Thyroid gland (tissue), 4 donors: ENCODE measurements at regions of chr20 and their contacts with region 1.

Region 1: GRCh38 chr20:645318-646106 is 7.5 kb downstream of the SRXN1 start:
- DNase-seq: peak; percentile 57 to 61
- H3K4me3 ChIP-seq: no peak overlapping the region
- H3K27ac ChIP-seq: no peak overlapping the region
- H3K4me1 ChIP-seq: peaks cover 11 to 12% of the 10 kb centered on the region in 2 donors
- H3K27me3 ChIP-seq: no peaks in the 10 kb centered on the region
- CTCF ChIP-seq: peak; percentile 69 to 95 (median 84)
- POLR2A ChIP-seq: no peak

Region 2: DNA sequence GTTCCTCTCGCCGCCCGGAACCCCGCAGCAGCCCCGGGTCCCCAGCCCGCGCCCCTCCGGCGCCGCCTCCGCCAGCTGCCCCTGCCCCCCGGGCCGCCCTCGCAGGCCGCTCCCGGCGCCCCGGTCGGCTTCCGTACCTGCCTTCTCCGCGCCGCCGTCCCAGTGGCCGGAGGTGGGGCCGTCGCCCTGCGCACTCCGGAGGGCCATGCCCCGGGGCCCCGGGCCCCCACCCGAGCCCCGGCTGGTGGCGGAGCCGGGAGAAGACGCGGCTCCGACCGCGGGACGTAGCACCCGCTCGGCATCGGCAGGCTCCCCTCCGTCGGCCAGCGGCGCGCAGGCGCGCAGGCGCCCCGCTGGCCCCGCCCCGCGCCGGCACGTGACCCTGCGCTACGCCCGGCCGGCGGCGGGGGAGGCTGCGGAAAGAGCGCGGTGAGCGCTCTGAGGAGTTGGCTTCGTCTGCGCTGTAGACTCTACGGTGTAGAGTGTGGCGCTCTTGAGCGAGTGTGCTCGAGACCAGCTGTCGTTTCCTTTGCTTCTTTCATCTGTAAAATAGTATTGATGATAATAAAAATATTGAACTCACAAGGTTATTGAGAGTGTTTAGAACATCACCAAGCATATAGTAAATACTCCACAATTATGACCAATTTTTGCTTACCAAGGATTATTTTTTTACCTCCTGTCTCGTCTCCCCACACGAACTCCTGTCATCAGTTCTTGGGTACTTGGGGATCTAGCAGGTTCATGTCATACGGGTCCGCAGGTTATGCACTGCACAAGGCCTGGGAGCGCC is 183.1 kb before region 1 on chr20 and contains the start of gene TBC1D20:
- intact Hi-C with region 1: loop called (anchors 10 kb)
- DNase-seq: peak; percentile 85
- H3K4me3 ChIP-seq: peak within 1 kb of the TSS; percentile 25 to 89 (median 87)
- H3K27ac ChIP-seq: peak within 1 kb of the TSS; percentile 85 to 93 (median 89)
- H3K4me1 ChIP-seq: peaks cover 20 to 23% of the 10 kb centered on the region in 2 donors
- H3K27me3 ChIP-seq: no peaks in the 10 kb centered on the region
- CTCF ChIP-seq: peak in 2 of 6 experiments; percentile 14
- POLR2A ChIP-seq: peak in 1 of 2 donors; percentile 94
- total RNA-seq, gene TBC1D20: 34.1 to 40.5 (median 35.6) TPM

Region 3: DNA sequence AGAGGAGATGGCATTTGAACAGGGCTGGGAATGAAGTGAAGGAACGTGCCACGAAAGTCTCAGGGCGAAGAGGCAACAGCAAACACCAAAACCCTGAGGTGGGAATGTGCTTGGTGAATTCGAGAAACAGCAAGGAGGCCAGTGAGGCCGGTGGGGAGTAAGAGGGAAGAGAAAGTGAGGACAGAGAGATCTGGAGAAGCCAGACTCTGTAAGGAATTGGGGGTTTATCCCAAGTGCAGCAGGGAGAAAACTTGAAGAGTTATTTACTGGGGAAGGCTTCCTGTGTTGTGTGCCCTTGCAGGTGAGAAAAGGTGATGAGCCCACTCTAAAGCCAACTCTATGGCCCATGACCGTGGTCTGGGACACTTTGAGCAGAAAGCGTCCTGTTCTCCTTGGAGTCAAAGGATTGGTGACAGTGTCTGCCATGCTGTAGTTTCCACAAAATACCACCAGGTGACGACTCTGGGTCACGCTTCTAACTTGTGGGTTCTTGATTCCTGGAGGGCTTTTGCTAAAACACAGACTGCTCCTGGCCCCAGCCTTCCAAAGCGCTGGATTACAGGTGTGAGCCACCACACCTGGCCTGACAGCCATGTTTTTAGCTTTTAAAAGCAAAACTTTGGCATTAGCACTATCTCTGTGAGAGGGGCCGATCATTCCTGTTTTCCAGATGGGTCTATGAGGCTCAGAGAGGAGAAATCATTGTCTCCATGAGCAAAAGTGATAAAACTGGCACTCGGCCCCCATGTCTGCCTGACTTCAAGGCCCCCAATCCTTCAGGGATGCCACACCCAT is 83.9 kb before region 1 on chr20:
- intact Hi-C with region 1: loop called (anchors 5 kb)
- DNase-seq: peak; percentile 44 to 51
- H3K4me3 ChIP-seq: no peak overlapping the region
- H3K27ac ChIP-seq: no peak overlapping the region
- H3K4me1 ChIP-seq: no peaks in the 10 kb centered on the region
- H3K27me3 ChIP-seq: no peaks in the 10 kb centered on the region
- CTCF ChIP-seq: peak; percentile 70 to 89 (median 76)
- POLR2A ChIP-seq: no peak

Region 4: DNA sequence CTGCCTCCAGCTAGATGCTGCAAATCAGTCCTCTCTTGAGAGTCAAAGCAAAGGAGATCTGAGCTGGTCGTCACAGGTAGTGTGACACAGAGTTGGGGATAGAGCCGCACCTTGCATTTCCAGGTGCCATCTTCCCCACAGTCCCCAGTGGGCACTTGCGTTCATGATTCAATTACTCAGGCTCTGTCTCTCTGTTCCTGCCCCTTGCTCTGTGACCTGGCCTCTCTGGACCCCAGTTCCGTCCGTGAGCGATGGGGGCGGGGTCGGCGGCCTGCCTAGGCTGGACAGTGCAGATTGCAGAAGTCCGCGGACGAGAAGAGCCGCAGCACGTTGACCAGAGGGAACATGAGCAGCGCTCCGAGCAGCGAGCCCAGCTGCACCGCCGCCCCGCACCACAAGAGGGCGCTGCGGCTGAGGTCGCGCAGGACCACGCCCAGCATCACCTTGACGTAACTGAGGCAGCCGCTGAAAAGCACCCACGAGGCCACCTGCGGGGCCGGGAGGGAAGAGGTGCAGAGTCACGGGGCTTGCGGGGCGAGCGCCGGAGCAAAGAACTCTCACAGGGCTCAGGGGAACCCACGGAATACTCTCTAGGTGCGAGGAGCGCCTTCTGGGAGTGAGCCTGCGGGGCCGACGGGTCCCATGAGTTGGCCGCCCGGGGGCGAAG is 115.4 kb after region 1 on chr20:
- intact Hi-C with region 1: no loop called
- DNase-seq: peak; percentile 16 to 28
- H3K4me3 ChIP-seq: no peak overlapping the region
- H3K27ac ChIP-seq: no peak overlapping the region
- H3K4me1 ChIP-seq: peaks cover 0 to 5% of the 10 kb centered on the region in 2 donors
- H3K27me3 ChIP-seq: no peaks in the 10 kb centered on the region
- CTCF ChIP-seq: peak; percentile 24 to 81 (median 44)
- POLR2A ChIP-seq: no peak